GM12878 (cell line): ENCODE measurements at regions of chrX and their contacts with region 1.

Region 1: GRCh38 chrX:3962511-3963311 is 249.3 kb upstream of the PRKX start:
- DNase-seq: no peak
- ATAC-seq: peak; percentile 69
- H3K4me3 ChIP-seq: no peak overlapping the region
- H3K27ac ChIP-seq: no peak overlapping the region
- H3K4me1 ChIP-seq: no peaks in the 10 kb centered on the region
- H3K27me3 ChIP-seq: no peaks in the 10 kb centered on the region
- CTCF ChIP-seq: peak; percentile 47 to 57 (median 49); a peak in 5 of 6 replicates
- EP300 ChIP-seq: no peak
- POLR2A ChIP-seq: no peak
- RAD21 ChIP-seq: peak; percentile 36

Region 2: DNA sequence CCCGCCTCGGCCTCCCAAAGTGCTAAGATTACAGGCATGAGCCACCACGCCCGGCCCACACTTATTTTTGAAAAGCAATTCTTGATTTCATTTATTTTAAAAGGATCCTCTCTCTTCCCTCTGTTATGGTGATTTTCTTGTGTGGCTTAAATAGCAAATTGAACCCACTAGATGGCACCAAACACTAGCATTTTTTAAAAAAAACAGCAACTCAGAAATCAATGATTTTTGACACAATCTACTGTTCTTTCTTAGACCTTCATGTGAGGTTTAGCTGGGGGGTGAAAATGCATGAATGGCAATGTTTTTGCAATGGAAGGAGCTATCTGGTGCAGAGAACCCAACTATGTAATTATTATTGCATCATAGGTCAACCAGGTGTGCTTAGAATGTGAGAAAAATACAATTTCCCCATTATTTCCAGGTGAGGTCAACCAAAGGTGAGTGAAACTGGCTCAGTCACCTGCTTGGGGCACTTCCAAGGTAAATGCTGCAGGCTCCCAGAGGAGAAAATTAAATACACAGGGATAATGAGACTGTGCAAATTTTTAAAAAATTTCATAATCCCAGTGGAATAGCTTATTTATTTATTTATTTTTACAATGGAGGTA is 22.6 kb before region 1 on chrX:
- CTCF ChIA-PET with region 1: interaction called, 28 read pairs
- POLR2A ChIA-PET with region 1: no interaction called
- RAD21 ChIA-PET with region 1: no interaction called
- SMC1A ChIA-PET with region 1: interaction called, 4 read pairs
- in situ Hi-C with region 1: no loop called
- intact Hi-C with region 1: no loop called
- DNase-seq: no peak
- ATAC-seq: peak; percentile 58
- H3K4me3 ChIP-seq: no peak overlapping the region
- H3K27ac ChIP-seq: no peak overlapping the region
- H3K4me1 ChIP-seq: no peaks in the 10 kb centered on the region
- H3K27me3 ChIP-seq: no peaks in the 10 kb centered on the region
- CTCF ChIP-seq: peak; percentile 31 to 59 (median 51); a peak in 5 of 6 replicates
- EP300 ChIP-seq: no peak
- POLR2A ChIP-seq: no peak
- RAD21 ChIP-seq: peak; percentile 59